A549 (cell line): ENCODE measurements at regions of chr5 and their contacts with region 1.

Region 1: DNA sequence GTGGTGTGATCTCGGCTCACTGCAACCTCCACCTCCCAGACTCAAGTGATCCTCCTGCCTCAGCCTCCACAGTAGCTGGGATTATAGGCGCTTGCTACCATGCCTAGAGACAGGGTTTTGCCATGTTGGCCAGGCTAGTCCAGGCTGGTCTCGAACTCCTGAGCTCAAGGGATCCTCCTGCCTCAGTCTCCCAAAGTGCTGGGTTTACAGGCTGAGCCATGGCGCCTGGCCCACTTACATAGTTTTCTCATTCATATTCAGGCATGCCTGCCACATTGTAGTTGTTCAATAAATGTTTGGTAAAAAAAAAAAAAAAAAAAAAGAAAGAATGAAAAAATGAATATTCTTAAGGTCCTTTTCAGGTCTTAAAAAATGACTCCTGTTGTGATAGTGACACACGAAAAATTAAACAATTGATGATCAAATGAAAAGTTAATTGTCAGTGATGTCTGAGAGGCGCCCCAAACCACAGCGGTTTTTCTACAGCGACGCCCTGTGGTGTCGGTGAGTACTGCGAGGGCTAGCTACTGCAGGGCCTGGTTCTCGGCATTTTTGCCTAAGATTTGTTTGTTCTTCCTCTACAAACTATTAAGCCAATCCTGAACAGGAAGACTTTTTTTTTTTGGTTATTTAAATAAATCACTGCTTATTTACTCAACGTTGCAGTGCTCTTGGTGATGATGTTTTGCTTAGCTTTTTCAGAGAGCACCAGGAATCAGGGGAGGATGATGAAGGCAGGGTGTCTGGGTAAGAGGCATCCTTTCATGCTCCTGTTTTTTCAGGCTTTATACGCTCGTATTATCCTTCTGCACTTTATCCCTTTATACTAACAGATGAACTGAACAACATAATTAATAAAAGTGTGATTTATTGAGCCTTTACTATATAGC is 67.0 kb upstream of the DPYSL3 start:
- DNase-seq: peak; percentile 12 to 40
- ATAC-seq: peak; percentile 73 to 90; a peak in 5 of 6 replicates
- H3K4me3 ChIP-seq: no peak overlapping the region
- H3K27ac ChIP-seq: no peak overlapping the region
- H3K4me1 ChIP-seq: no peaks in the 10 kb centered on the region
- CTCF ChIP-seq: peak; percentile 68
- EP300 ChIP-seq: no peak
- POLR2A ChIP-seq: no peak
- RAD21 ChIP-seq: peak; percentile 49 to 57

Region 2: GRCh38 chr5:147223948-147224791 is 352.7 kb before region 1 on chr5:
- CTCF ChIA-PET with region 1: interaction called, 10 read pairs
- POLR2A ChIA-PET with region 1: no interaction called
- DNase-seq: peak; percentile 27 to 38
- ATAC-seq: peak; percentile 79 to 92; a peak in 5 of 6 replicates
- H3K4me3 ChIP-seq: no peak overlapping the region
- H3K27ac ChIP-seq: no peak overlapping the region
- H3K4me1 ChIP-seq: no peaks in the 10 kb centered on the region
- CTCF ChIP-seq: peak; percentile 63
- EP300 ChIP-seq: no peak
- POLR2A ChIP-seq: no peak
- RAD21 ChIP-seq: peak; percentile 78 to 79

Region 3: GRCh38 chr5:147391781-147392180 is 185.1 kb before region 1 on chr5:
- CTCF ChIA-PET with region 1: interaction called, 15 read pairs
- POLR2A ChIA-PET with region 1: no interaction called
- DNase-seq: peak; percentile 48 to 56
- ATAC-seq: peak; percentile 95 to 98
- H3K4me3 ChIP-seq: no peak overlapping the region
- H3K27ac ChIP-seq: no peak overlapping the region
- H3K4me1 ChIP-seq: no peaks in the 10 kb centered on the region
- CTCF ChIP-seq: peak; percentile 33; the same call in 2 of the 3 replicates
- EP300 ChIP-seq: no peak
- POLR2A ChIP-seq: no peak
- RAD21 ChIP-seq: peak; percentile 38 to 55; a peak in 4 of 5 replicates

Region 4: DNA sequence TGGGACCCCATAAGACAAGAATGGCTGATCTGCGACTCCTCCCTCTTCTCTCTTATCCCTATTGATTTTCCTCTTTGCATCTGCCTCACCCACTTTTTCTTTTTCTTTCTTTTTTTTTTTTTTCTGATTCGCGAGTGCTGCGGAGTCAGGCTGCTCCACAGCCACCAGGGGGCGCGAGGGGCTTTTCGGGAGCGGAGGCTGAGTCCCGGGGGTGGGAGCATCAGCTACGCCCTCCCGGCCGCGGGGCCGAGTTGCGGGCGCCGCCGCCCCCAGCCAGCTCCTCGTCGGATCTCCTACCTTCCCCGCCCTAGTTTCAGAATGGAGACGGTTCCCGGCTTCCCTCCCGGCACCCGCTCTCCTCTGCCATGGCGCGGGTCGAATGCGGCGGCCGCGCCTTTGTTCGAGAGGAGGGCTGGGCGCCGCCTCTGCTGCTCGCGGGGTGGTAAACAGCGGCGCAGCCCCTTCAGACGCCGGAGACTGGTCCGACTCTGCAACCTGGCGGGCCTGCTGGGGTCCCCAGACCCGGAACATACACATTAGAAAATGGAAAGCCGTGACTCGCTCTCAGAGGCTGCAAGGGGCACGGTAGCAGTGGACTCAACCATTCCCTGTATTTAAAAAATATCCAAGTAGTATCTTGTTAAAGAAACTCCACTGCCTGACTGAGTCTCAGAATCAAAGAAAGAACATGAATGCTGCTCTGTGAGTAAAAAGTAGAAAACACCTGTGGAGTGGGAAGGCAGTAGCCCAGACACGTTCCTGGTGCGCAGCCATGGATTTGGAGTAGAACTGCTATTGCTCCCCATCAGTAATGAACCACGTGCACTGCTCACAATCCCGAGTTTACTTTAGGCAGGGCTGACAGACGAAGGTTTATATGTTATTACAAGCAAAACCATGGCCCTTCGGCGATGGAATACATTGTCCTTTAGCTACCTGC is 122.7 kb before region 1 on chr5:
- CTCF ChIA-PET with region 1: interaction called, 97 read pairs
- POLR2A ChIA-PET with region 1: no interaction called
- DNase-seq: peak; percentile 76
- ATAC-seq: peak; percentile 86 to 95
- H3K4me3 ChIP-seq: peak overlapping the region; percentile 58
- H3K27ac ChIP-seq: peak overlapping the region; percentile 62 to 89; a peak in 5 of 6 replicates
- H3K4me1 ChIP-seq: 0 out of 3 replicates have a peak, but pooled peaks cover 2% of the 10 kb centered on the region
- CTCF ChIP-seq: peak; percentile 81
- EP300 ChIP-seq: no peak
- POLR2A ChIP-seq: no peak
- RAD21 ChIP-seq: peak; percentile 68 to 76

Region 5: DNA sequence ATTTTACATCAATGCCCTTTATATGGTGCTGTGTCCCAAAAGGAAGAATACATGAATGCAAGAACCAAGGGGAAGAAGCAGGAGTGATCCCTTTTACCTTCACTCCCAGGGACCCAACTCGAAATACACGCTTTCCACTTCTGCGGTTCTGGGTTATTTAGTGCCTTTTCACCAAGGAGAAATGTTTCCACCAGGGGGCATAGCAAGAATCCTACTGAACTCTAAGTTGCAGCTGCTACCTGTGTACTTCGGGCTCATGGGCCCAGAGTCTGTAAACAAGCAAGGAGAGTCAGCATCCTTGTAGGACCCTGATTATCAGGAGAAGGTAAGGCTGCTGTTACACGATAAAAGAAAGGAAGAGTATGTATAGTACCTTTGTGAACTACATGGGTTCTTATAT is 112.7 kb before region 1 on chr5:
- CTCF ChIA-PET with region 1: interaction called, 24 read pairs
- POLR2A ChIA-PET with region 1: no interaction called
- DNase-seq: peak in 1 of 2 experiments; percentile 49
- ATAC-seq: peak; percentile 71 to 80; a peak in 4 of 6 replicates
- H3K4me3 ChIP-seq: no peak overlapping the region
- H3K27ac ChIP-seq: no peak overlapping the region
- H3K4me1 ChIP-seq: no peaks in the 10 kb centered on the region
- CTCF ChIP-seq: peak; percentile 33
- EP300 ChIP-seq: no peak
- POLR2A ChIP-seq: no peak
- RAD21 ChIP-seq: peak; percentile 37 to 46; a peak in 4 of 5 replicates

Region 6: DNA sequence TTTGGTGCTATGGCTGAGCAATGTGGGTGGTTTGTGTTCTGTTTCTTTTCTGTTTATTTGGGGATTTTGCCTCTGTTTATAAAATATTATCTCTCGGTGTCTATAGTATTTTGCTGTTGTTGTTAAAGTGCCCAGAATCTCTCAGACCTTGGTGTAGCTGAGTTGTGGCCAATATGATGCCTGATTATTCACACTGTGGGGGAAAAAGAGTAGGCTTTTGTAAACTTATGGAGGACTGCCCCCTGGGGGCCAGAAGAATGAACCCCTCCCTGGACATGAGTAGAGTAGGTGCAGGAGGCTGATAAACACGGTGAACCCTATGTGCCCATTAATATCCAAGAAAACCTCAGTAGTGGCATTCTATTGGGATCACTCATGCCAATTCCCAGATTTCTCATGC is 18.1 kb before region 1 on chr5:
- CTCF ChIA-PET with region 1: interaction called, 18 read pairs
- POLR2A ChIA-PET with region 1: interaction called, 3 read pairs
- DNase-seq: peak; percentile 25 to 41
- ATAC-seq: peak; percentile 81 to 87
- H3K4me3 ChIP-seq: no peak overlapping the region
- H3K27ac ChIP-seq: no peak overlapping the region
- H3K4me1 ChIP-seq: no peaks in the 10 kb centered on the region
- CTCF ChIP-seq: peak; percentile 48; the same call in 2 of the 3 replicates
- EP300 ChIP-seq: no peak
- POLR2A ChIP-seq: no peak
- RAD21 ChIP-seq: peak; percentile 62 to 66